HepG2 (cell line): ENCODE measurements at regions of chr12 and their contacts with region 1.

Region 1: DNA sequence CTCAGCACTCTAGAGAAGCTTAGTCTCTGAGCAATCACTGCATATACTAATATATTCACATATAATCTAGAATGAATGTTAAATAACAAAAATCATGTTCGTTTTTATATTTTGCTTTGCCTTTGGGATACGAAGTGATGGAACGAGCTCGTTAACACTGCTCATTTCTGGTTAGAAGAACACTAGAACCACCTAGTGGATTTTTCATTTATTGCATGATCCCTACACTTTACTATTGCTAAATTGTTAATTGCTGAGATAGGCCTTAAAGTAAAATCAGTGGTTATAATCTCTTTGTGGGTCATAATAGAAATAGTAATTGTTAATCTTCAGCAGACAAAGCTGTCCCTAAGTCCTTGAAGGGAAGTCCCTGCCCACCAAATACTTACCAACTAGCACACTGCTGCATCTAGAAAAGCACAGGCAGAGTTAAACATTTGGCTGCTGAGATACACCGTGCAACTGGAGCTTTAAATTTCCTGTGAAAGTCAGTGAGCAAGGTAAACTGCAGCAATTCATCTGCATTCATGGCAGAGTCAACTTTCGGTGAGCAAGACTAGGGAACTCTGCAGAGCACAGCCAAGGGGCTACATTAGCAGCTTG is 353.7 kb downstream of the APAF1 start:
- DNase-seq: peak; percentile 21
- ATAC-seq: peak; percentile 89
- H3K4me3 ChIP-seq: no peak overlapping the region
- H3K27ac ChIP-seq: no peak overlapping the region
- H3K4me1 ChIP-seq: no peaks in the 10 kb centered on the region
- H3K27me3 ChIP-seq: no peaks in the 10 kb centered on the region
- CTCF ChIP-seq: peak; percentile 68
- EP300 ChIP-seq: no peak
- POLR2A ChIP-seq: no peak
- RAD21 ChIP-seq: no peak; the same call in 1 of the 2 replicates

Region 2: DNA sequence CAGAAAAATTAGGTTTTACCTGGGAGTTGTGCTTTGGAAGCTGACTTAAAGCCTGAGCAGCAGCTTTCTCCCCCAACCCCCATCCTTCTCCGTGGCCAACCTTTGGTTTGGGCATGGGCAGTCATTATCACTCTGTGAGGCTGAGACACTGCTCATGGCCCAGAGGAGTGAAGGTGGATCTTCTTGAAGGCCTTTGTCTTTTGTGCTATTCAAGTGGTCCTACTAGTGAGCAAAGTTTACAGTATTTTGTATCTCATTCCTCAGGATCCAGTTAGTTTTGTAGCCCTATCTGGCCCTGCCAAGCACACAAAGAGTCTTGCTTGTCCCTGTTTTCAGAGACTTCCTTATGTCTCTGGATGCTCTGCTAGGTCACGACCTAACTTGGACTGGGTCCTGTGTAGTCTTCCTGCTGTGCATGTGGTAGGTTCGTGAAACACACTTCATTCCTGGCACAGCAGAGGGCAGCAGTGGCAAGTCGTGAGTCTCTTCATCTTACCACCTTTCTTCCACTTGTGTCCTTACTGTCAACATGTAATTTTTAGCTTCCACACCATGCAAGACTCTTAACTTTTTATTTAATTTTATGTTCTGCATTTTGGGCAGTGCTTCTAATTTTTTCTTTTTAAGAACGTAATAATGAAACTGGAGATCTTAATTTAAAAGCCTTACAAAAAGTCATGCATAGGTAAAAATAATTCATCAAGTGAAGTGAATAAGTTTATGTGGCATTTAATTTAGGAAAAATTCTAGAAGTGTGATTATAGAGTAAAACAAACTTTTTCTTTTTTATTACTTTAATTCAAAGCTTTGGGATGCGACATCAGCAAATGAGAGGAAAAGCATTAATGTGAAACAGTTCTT is 300.0 kb before region 1 on chr12:
- CTCF ChIA-PET with region 1: interaction called, 19 read pairs
- POLR2A ChIA-PET with region 1: no interaction called
- in situ Hi-C with region 1: loop called (anchors 5 kb)
- intact Hi-C with region 1: loop called (anchors 1 kb)
- DNase-seq: peak; percentile 39
- ATAC-seq: peak; percentile 98
- H3K4me3 ChIP-seq: no peak overlapping the region
- H3K27ac ChIP-seq: no peak overlapping the region
- H3K4me1 ChIP-seq: no peaks in the 10 kb centered on the region
- H3K27me3 ChIP-seq: no peaks in the 10 kb centered on the region
- CTCF ChIP-seq: peak; percentile 83
- EP300 ChIP-seq: no peak
- POLR2A ChIP-seq: no peak
- RAD21 ChIP-seq: peak; percentile 51; the same call in 1 of the 2 replicates

Region 3: GRCh38 chr12:98725476-98726247 is 273.1 kb before region 1 on chr12:
- CTCF ChIA-PET with region 1: interaction called, 12 read pairs
- POLR2A ChIA-PET with region 1: no interaction called
- in situ Hi-C with region 1: no loop called
- intact Hi-C with region 1: loop called (anchors 1 kb)
- DNase-seq: peak; percentile 28
- ATAC-seq: peak; percentile 97
- H3K4me3 ChIP-seq: no peak overlapping the region
- H3K27ac ChIP-seq: no peak overlapping the region
- H3K4me1 ChIP-seq: no peaks in the 10 kb centered on the region
- H3K27me3 ChIP-seq: no peaks in the 10 kb centered on the region
- CTCF ChIP-seq: peak; percentile 75
- EP300 ChIP-seq: no peak
- POLR2A ChIP-seq: no peak
- RAD21 ChIP-seq: no peak

Region 4: DNA sequence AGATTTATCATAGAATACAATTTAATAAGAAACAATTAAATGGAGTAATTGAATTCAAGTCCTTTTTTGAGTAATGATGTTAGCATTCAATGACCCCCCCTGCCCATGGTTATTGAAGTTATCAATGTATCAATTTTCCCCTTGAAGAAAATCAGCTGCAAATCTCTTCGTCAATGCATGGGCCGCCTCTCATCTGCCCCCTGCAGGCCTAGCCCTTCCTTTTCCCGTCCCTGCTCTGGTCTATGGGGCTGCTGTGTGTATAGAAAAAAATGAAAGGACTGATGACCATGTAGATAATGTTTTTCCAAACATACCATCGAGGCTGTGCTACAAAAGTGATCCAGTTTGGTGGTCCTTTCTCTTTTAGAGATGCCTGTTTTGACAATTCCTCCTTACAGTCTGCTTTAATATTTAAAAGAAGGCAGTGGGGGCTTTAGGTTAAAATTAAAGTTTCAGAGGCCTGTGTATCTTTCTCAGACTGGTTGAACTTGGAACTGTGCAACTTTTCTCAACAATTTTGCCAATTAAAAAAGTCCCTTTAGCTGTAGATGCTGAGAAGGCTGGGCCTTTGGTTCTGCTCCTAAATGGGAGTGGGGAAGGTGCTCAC is 255.3 kb before region 1 on chr12:
- CTCF ChIA-PET with region 1: no interaction called
- POLR2A ChIA-PET with region 1: no interaction called
- in situ Hi-C with region 1: no loop called
- intact Hi-C with region 1: loop called (anchors 5 kb)
- DNase-seq: peak; percentile 30
- ATAC-seq: peak; percentile 89
- H3K4me3 ChIP-seq: no peak overlapping the region
- H3K27ac ChIP-seq: no peak overlapping the region
- H3K4me1 ChIP-seq: peaks cover 9% of the 10 kb centered on the region
- H3K27me3 ChIP-seq: peaks cover 12 to 33% of the 10 kb centered on the region in 2 experiments
- CTCF ChIP-seq: peak; percentile 69
- EP300 ChIP-seq: no peak
- POLR2A ChIP-seq: no peak
- RAD21 ChIP-seq: no peak

Region 5: GRCh38 chr12:98955277-98955676 is 43.5 kb before region 1 on chr12:
- CTCF ChIA-PET with region 1: interaction called, 9 read pairs
- POLR2A ChIA-PET with region 1: no interaction called
- in situ Hi-C with region 1: no loop called
- intact Hi-C with region 1: loop called (anchors 2 kb)
- DNase-seq: peak; percentile 21
- ATAC-seq: peak; percentile 86
- H3K4me3 ChIP-seq: no peak overlapping the region
- H3K27ac ChIP-seq: no peak overlapping the region
- H3K4me1 ChIP-seq: no peaks in the 10 kb centered on the region
- H3K27me3 ChIP-seq: no peaks in the 10 kb centered on the region
- CTCF ChIP-seq: peak; percentile 34
- EP300 ChIP-seq: no peak
- POLR2A ChIP-seq: no peak
- RAD21 ChIP-seq: no peak